Spleen (tissue), 13 donors: ENCODE measurements at regions of chr12 and their contacts with region 1.

Region 1: DNA sequence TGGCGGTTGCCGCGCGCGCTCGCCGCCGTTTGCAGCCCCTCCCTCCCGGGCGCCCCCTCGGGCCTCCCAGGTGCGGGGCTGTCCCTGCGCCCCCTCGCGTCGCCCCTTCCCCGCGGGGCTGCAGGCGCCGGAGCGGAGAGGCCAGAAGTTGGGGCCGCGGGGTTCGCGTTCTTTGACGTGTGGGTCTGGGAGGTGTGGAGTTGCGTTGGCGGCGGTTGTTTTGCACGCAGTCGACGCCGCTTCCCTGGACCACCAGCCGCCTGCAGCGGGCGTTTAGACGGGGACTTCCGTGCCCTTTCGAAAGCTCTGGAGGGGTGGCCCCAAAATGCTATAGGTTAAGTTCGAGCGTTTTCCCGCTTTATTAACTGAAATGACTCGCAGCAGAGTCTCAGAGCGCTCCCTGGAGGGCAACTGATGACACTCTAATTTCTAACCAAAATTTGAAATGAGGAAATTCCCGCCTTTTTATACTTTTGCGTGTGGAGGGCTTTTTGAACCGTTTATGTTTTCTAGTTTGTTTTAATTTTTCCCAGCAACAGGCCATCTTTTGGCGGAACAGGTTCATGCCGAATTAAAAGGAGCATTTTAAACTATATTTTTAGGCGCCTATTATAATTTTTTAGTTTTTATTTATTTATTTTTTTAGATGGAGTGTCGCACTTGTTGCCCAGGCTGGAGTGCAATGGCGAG is 939 bp downstream of the TMPO start:
- DNase-seq: peak; percentile 93
- H3K4me3 ChIP-seq: peak overlapping the region; percentile 90 to 99 (median 95)
- H3K27ac ChIP-seq: peak overlapping the region; percentile 95 to 98 (median 98)
- H3K4me1 ChIP-seq: peaks cover 33 to 74% (median 67%) of the 10 kb centered on the region in 6 donors
- H3K27me3 ChIP-seq: no peaks in the 10 kb centered on the region
- CTCF ChIP-seq: peak in 10 of 11 experiments; percentile 29 to 79 (median 70)
- POLR2A ChIP-seq: no peak

Region 2: GRCh38 chr12:98464190-98464589 is 52.1 kb before region 1 on chr12:
- intact Hi-C with region 1: no loop called
- DNase-seq: no peak
- H3K4me3 ChIP-seq: no peak overlapping the region
- H3K27ac ChIP-seq: peak overlapping the region in 3 of 8 donors; percentile 6 to 34 (median 19)
- H3K4me1 ChIP-seq: peaks cover 0 to 13% (median 0%) of the 10 kb centered on the region in 6 donors
- H3K27me3 ChIP-seq: no peaks in the 10 kb centered on the region
- CTCF ChIP-seq: no peak
- POLR2A ChIP-seq: no peak

Region 3: DNA sequence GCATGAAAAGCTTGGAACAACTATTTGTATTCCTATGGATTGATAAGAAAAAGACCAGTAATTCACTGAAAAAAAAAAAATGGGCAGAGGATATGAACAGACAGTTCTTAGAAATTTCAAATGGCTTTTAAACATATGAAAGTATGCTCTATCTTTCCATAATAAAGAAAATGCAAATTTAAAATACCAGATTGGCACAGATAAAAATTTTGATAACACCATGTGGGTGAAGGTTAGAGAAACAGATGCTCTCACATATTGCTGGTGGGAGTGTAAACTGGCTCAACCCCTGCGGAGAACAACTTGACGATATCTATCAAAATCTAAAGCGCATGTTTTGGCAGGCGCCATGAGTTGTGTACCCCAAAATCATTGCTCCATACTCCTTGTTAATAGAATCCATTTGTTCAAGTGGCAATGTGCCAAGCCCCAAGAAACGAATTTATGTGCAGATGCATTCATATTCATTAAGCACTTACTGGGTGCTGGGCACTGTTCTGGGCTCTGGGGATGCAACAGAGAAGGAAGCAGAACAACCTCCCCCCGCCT is 30.5 kb before region 1 on chr12:
- intact Hi-C with region 1: loop called (anchors 5 kb)
- DNase-seq: no peak
- H3K4me3 ChIP-seq: no peak overlapping the region
- H3K27ac ChIP-seq: no peak overlapping the region
- H3K4me1 ChIP-seq: peaks cover 0 to 17% (median 4%) of the 10 kb centered on the region in 6 donors
- H3K27me3 ChIP-seq: no peaks in the 10 kb centered on the region
- CTCF ChIP-seq: no peak
- POLR2A ChIP-seq: no peak

Region 4: GRCh38 chr12:98653866-98654493 is 137.7 kb after region 1 on chr12:
- intact Hi-C with region 1: no loop called
- DNase-seq: no peak
- H3K4me3 ChIP-seq: no peak overlapping the region
- H3K27ac ChIP-seq: no peak overlapping the region
- H3K4me1 ChIP-seq: peaks cover 0 to 11% (median 0%) of the 10 kb centered on the region in 6 donors
- H3K27me3 ChIP-seq: no peaks in the 10 kb centered on the region
- CTCF ChIP-seq: peak in 9 of 11 experiments; percentile 26 to 63 (median 59)
- POLR2A ChIP-seq: no peak